BJ (cell line): ENCODE measurements at regions of chr19 and their contacts with region 1.

Region 1: GRCh38 chr19:14496028-14496833 is at the start of gene GIPC1:
- DNase-seq: peak; percentile 87
- H3K4me3 ChIP-seq: peak within 1 kb of the TSS; percentile 92
- H3K27me3 ChIP-seq: no peaks in the 10 kb centered on the region
- CTCF ChIP-seq: no peak
- polyA plus RNA-seq, gene GIPC1: 92.3 and 119 TPM in 2 replicates

Region 2: GRCh38 chr19:14479975-14480699 is 16.1 kb before region 1 on chr19:
- CTCF ChIA-PET with region 1: interaction called, 32 read pairs
- POLR2A ChIA-PET with region 1: no interaction called
- DNase-seq: no peak
- H3K4me3 ChIP-seq: no peak overlapping the region
- H3K27me3 ChIP-seq: no peaks in the 10 kb centered on the region
- CTCF ChIP-seq: peak; percentile 82